PC-9 (cell line): ENCODE measurements at regions of chr10 and their contacts with region 1.

Region 1: GRCh38 chr10:110398419-110399162 is 93.9 kb upstream of the SMNDC1 start:
- DNase-seq: peak; percentile 88 to 94
- H3K4me3 ChIP-seq: peak overlapping the region; percentile 41; the same call in 1 of the 2 replicates
- H3K27ac ChIP-seq: peak overlapping the region; percentile 100
- H3K4me1 ChIP-seq: peaks cover 71% of the 10 kb centered on the region
- H3K27me3 ChIP-seq: no peaks in the 10 kb centered on the region
- CTCF ChIP-seq: no peak

Region 2: DNA sequence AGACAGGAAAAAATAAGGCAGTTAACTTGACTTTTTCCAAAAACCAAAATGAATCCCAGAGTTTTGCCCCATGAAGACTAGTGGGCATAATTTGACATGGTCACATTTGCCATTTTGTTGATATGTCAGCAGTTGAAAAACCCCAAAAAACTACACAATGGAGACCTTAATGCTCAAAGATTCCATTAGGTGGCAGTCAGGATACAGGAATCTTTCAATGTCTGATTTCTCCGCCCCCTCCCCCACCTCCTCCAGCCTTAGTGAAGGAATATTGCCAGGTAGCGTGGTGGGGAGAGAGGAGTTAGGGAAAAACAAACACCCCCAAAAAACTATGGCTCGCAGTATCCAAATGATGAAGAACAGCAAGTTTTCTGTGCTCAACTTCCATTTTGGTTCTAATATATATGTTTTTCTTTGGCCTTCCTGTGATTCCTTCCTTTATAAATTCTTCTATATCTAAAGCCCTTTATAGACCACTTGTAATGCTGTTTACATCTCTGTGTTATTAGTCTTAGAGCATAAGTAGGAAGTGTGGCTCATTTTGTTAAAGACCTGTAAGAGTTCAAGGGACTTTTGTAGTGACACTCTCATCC is 87.1 kb before region 1 on chr10:
- CTCF ChIA-PET with region 1: no interaction called
- POLR2A ChIA-PET with region 1: interaction called, 3 read pairs
- intact Hi-C with region 1: loop called (anchors 2 kb)
- DNase-seq: peak; percentile 23 to 47
- H3K4me3 ChIP-seq: no peak overlapping the region
- H3K27ac ChIP-seq: peak overlapping the region; percentile 45
- H3K4me1 ChIP-seq: peaks cover 27% of the 10 kb centered on the region
- H3K27me3 ChIP-seq: no peaks in the 10 kb centered on the region
- CTCF ChIP-seq: peak; percentile 76

Region 3: GRCh38 chr10:110326351-110327032 is 72.1 kb before region 1 on chr10:
- CTCF ChIA-PET with region 1: no interaction called
- POLR2A ChIA-PET with region 1: no interaction called
- intact Hi-C with region 1: loop called (anchors 2 kb)
- DNase-seq: peak in 1 of 2 experiments; percentile 89
- H3K4me3 ChIP-seq: peak overlapping the region; percentile 20; the same call in 1 of the 2 replicates
- H3K27ac ChIP-seq: peak overlapping the region; percentile 99
- H3K4me1 ChIP-seq: peaks cover 62% of the 10 kb centered on the region
- H3K27me3 ChIP-seq: no peaks in the 10 kb centered on the region
- CTCF ChIP-seq: no peak

Region 4: DNA sequence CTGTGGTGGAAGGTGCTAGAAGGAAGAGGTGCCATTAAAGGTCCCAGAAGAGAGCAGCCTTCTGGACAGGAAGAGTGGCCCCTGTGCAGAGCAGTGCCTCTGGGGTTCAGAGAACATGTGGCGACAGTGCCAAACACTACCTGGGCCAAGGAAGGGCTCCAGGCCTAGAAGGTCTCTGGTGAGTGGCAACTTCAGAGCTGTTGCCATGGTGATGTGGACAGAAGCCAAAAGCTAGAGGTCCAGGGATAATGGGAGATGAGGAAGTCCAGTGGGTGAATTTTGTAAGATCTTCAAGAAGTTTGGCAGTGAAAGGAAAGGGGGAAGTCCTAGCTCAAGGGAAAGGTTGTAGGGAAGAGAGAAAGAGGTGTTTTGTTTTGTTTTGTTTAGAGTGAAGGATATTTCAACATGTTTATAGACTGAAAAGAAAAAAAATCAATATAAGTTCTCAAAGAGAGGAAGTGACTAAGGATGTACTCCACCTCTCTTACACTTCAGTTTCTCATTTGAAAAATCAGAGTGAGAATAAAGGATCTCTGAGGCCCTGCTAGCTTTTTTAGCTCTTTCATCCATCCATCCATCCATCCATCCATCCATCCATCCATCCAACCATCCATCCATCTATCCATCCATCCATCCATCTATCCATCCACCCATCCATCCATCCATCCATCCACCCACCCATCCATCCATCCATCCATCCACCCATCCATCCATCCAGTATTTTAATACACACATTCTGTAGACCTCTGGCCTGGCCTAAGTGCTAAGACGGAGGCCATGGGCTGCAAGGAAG is 22.0 kb after region 1 on chr10:
- CTCF ChIA-PET with region 1: no interaction called
- POLR2A ChIA-PET with region 1: interaction called, 10 read pairs
- intact Hi-C with region 1: loop called (anchors 2 kb)
- DNase-seq: peak; percentile 55 to 93
- H3K4me3 ChIP-seq: no peak overlapping the region
- H3K27ac ChIP-seq: peak overlapping the region; percentile 74
- H3K4me1 ChIP-seq: peaks cover 62% of the 10 kb centered on the region
- H3K27me3 ChIP-seq: no peaks in the 10 kb centered on the region
- CTCF ChIP-seq: no peak

Region 5: DNA sequence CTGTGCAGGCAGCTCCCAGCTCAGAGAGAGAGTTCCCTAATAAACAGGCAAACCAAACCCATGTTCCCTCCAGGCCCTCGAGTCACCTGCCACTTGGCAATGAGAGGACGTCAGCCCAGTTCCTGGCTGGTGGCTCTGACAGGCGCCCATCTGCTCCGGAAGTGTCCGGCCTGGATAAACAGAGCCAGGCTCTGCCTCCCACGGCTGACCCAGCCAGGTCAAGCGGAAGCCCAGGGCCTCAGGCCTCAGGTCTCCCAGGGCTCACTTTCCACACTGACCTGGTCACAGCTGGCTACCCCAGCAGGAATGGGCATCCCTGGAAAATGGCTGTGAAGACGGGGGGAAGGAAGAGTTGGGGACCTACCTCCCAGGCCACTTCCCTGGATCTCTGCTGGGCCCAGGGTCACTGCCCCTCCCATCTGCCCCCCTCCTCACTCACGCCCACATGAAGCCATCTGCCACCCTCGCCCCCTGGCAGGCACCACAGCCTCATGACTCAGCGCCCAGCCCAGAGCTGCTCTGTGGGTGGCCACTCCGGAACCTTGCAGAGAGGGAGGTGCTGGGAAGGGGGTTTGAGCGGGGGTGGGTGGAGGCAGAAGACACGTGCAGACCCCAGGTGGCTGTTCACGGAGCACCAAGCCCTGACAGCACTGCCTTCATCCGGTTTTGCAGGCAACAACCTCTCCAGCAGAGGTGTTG is 61.7 kb after region 1 on chr10:
- CTCF ChIA-PET with region 1: no interaction called
- POLR2A ChIA-PET with region 1: no interaction called
- intact Hi-C with region 1: loop called (anchors 2 kb)
- DNase-seq: peak; percentile 69 to 90
- H3K4me3 ChIP-seq: peak overlapping the region; percentile 32; the same call in 1 of the 2 replicates
- H3K27ac ChIP-seq: peak overlapping the region; percentile 87
- H3K4me1 ChIP-seq: peaks cover 66% of the 10 kb centered on the region
- H3K27me3 ChIP-seq: no peaks in the 10 kb centered on the region
- CTCF ChIP-seq: no peak

Region 6: GRCh38 chr10:110794808-110795207 is 396.2 kb after region 1 on chr10:
- CTCF ChIA-PET with region 1: no interaction called
- POLR2A ChIA-PET with region 1: no interaction called
- intact Hi-C with region 1: no loop called
- DNase-seq: no peak
- H3K4me3 ChIP-seq: no peak overlapping the region
- H3K27ac ChIP-seq: no peak overlapping the region
- H3K4me1 ChIP-seq: no peaks in the 10 kb centered on the region
- H3K27me3 ChIP-seq: no peaks in the 10 kb centered on the region
- CTCF ChIP-seq: no peak